ENCODE measurements at regions of chr1 and their contacts with region 1.

Region 1: DNA sequence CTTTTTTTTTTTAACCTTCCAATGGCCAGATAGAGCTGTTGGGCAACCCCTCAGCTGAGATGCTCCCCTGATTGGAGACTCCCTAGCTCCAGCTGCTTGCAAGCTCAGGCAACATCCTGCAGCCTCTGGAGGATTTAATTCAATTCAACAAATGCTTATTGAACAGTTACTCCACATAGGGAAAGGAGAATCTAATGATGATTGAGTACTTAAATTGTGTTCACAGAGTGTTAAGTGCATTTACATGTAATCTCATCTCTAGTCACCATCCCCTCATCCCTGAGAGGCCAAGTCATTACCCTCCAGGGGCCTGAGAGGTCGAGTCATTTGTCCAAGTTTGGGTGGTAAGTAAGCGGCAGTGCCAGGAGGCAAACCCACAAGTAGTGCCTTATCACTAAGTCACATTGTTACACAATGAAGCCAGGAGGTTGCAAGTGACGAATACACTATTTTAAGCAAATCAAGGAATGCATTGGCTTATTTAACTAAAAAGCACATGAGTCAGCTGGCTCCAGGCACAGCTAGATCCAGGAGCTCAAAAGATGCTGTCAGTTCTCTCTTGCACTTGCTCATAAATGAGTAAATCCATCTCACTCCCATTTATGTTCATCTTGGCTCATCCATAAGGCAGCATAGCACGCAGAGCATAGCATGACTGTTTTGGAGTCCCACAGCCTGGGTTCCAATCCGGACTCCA is 64.3 kb downstream of the OPTC start:
- DNase-seq: peak; percentile 89

Region 2: DNA sequence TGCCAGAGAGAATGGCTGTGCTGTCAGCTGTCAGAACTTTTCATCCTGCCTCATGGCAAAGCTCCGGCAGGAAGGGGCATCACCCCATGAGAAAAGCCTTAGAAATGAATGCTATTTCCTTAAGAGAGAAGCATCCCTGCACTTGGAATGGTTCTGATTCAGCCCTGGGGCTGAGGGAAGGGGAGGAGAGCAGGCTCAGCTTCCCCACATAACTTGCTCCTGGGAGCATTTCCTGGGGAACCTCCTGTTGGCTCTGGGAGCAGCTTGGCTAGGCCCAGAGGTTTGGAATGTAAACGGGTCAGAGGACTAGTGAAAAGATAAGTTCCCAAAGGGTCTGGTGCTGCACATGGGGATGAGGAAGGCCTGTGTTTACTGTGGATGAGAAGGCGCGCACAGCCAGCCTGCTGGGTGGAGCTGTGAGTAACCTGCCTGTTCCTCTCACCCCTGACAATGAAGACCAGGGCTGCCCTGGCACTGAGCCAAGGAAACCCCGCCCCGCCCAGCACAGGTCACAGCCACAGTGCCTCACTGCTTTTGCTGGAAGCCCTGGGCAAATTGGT is 77.6 kb before region 1 on chr1:
- intact Hi-C with region 1: no loop called
- DNase-seq: no peak

Region 3: DNA sequence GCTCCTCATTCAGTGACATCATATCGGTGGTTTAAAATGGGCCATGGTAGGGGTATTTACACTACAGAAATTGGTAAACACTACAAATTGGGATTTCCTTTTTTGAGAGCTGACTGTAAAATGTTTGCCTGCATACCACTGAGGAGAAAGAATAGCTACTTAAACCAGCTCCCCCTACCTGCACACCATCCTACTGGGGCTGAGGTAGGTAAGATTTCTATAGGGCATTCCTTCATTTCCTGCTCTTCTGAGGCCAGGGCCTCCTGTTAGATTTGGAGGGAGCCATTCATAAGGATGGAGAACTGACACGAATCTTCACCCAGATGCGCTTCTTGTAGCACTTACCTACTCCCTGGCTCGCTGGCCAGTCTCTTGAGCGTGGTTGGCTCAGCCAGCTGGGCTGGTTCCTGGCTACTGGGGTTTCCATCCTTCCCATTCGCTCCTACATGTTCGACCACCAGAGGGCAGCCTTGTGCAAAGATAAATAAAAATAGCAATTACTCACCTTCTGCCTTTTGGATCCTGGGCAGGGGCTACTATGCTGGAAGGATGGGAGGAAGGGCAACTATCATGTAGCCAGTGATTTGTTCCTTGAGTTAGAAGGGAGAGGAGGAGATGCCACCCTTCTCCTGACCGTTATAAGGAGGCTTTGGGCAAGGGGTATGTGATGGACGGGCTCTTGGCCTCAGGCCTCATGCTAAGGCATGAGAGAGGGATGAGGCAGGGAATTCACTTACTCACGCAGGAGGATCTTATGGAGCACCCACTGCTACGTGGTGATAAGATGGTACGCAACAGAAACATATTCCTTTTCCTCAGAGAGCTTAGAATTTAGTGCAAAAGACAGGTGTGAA is 53.6 kb before region 1 on chr1:
- intact Hi-C with region 1: loop called in 1 of 2 experiments (anchors 5 kb)
- DNase-seq: peak; percentile 91

Region 4: GRCh38 chr1:203584035-203584434 is 25.8 kb after region 1 on chr1:
- intact Hi-C with region 1: no loop called
- DNase-seq: no peak

Region 5: GRCh38 chr1:203600782-203601736 is 42.8 kb after region 1 on chr1:
- intact Hi-C with region 1: loop called in 1 of 2 experiments (anchors 5 kb)
- DNase-seq: no peak